ENCODE measurements at regions of chr4 and their contacts with region 1.

Region 1: DNA sequence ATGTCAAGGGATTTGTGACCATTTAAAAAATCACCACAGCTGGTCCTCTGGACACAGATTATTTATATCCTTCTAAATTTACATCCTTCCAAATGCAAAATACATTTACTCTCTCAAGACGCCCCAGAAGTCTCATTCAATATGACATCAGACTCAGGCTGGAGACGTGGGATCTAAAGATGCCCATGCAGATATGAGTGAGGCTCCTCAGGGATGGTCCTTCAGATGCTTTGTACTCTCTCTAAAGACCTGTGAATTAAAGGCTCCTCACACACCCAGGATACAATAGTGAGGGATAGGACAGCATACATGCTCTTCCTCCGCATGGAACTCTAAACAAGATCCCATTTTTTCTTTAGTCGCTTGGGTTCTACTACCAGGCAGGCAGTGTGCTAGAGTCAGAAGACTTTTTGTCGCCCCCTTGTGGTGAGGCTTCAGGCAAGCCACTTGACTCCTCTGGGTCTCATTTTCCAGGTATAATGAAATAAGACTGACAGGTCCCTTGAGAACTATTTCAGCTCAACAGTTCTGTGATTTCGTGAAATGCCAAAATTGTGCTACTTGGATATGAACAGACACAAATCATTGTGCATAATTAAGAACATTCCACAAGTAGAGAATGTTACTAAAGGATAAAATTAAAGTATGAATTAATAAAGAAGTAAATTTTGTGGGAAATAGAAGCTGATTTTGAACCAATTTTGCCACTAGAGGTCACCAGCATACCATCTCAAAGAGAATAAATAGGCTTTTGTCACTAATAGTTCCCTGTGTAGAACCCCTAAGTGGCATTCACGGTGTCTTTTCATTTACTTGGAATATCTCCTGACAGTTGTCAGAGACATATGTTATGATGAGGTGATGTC is 13.7 kb upstream of the SCOC start:
- DNase-seq: peak; percentile 86
- H3K4me3 ChIP-seq: no peak overlapping the region
- H3K27ac ChIP-seq: no peak overlapping the region
- H3K4me1 ChIP-seq: peaks cover 6% of the 10 kb centered on the region
- H3K27me3 ChIP-seq: no peaks in the 10 kb centered on the region
- CTCF ChIP-seq: peak; percentile 77 to 89
- POLR2A ChIP-seq: no peak

Region 2: GRCh38 chr4:139656614-139657486 is 702.9 kb before region 1 on chr4:
- CTCF ChIA-PET with region 1: interaction called, 39 read pairs
- POLR2A ChIA-PET with region 1: no interaction called
- dilution Hi-C with region 1: no loop called
- intact Hi-C with region 1: loop called (anchors 1 kb)
- DNase-seq: peak; percentile 76
- H3K4me3 ChIP-seq: peak overlapping the region in 1 of 3 experiments; percentile 30
- H3K27ac ChIP-seq: peak overlapping the region; percentile 94
- H3K4me1 ChIP-seq: peaks cover 45% of the 10 kb centered on the region
- H3K27me3 ChIP-seq: no peaks in the 10 kb centered on the region
- CTCF ChIP-seq: peak; percentile 83 to 86
- POLR2A ChIP-seq: no peak

Region 3: GRCh38 chr4:139808808-139809756 is 550.7 kb before region 1 on chr4:
- CTCF ChIA-PET with region 1: interaction called, 10 read pairs
- POLR2A ChIA-PET with region 1: no interaction called
- dilution Hi-C with region 1: no loop called
- intact Hi-C with region 1: no loop called
- DNase-seq: peak; percentile 81
- H3K4me3 ChIP-seq: no peak overlapping the region
- H3K27ac ChIP-seq: peak overlapping the region; percentile 18
- H3K4me1 ChIP-seq: peaks cover 9% of the 10 kb centered on the region
- H3K27me3 ChIP-seq: no peaks in the 10 kb centered on the region
- CTCF ChIP-seq: no peak
- POLR2A ChIP-seq: no peak

Region 4: GRCh38 chr4:140326395-140326993 is 33.3 kb before region 1 on chr4:
- CTCF ChIA-PET with region 1: interaction called, 69 read pairs
- POLR2A ChIA-PET with region 1: no interaction called
- dilution Hi-C with region 1: no loop called
- intact Hi-C with region 1: no loop called
- DNase-seq: peak; percentile 68
- H3K4me3 ChIP-seq: no peak overlapping the region
- H3K27ac ChIP-seq: no peak overlapping the region
- H3K4me1 ChIP-seq: no peaks in the 10 kb centered on the region
- H3K27me3 ChIP-seq: peaks cover 4 to 6% of the 10 kb centered on the region in 2 experiments
- CTCF ChIP-seq: peak; percentile 69
- POLR2A ChIP-seq: no peak

Region 5: DNA sequence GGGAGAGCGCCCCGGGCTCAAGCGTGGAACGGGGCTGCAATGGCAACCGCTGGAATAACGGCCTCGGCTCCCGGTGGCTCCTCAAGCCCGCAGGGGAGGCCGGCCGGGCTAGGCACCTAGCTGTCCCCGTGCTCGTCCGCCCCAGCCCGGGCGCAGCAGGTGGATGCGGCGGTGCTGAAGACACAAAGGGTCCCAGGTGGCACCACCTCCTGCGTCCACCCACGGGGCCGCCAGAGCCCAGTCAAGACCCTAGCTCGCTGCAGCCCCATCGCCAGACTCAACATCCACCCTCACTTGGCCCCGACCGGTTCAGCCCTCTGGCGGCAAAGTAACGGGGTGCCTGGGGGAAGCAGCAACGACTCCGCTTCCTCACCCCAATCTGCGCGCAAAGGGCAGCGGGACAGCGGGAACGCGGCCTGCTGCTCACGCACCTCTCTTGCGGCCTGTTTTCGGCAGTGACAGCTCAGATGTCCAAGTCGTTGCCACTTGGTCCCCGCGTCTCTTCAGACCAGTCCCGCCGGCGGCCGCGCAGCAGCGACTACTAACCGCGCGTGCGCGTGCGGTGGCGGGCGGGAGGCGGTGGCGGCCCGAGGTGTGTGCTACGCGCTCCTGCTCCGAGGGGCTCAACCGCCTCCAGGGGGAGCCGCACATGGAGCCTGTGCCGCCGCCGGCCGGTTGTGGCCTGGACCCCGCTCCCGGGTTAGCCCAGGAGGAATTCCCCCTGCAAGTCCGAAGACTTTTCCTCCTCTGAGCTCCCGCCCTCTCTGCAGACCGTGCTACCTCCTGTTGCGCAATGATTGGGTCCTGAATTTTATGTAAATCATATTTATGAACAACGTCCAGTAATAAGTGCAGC is 67.5 kb after region 1 on chr4 and contains the start of gene CLGN:
- CTCF ChIA-PET with region 1: interaction called, 30 read pairs
- POLR2A ChIA-PET with region 1: no interaction called
- dilution Hi-C with region 1: no loop called
- intact Hi-C with region 1: loop called (anchors 1 kb)
- DNase-seq: peak; percentile 78
- H3K4me3 ChIP-seq: peak within 1 kb of the TSS; percentile 30 to 64 (median 48)
- H3K27ac ChIP-seq: no peak within 1 kb of the TSS
- H3K4me1 ChIP-seq: peaks cover 9% of the 10 kb centered on the region
- H3K27me3 ChIP-seq: peaks cover 14 to 34% of the 10 kb centered on the region in 2 experiments
- CTCF ChIP-seq: peak; percentile 58 to 68
- POLR2A ChIP-seq: no peak
- total RNA-seq, gene CLGN: 0.60 and 1.00 TPM in 2 replicates

Region 6: DNA sequence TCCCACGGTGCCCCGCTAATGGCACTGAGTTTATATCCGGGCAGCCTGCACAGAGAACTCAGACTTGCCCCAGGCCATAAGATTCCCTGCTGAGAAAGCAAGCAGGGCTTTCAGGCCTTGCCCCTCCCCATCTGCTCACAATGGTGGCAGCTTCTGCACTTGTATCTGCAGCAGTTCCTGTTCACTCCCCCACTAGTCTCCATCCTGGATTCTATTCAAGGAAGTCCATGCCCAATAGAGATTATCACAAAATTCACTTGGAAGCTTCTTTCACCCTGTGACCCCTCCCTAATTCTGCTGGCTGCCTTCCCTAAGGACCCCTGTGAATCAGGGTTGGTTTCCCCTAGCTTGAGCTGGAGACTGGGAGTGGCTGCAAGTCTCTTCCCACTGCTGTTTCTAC is 243.5 kb after region 1 on chr4:
- CTCF ChIA-PET with region 1: interaction called, 116 read pairs
- POLR2A ChIA-PET with region 1: no interaction called
- dilution Hi-C with region 1: no loop called
- intact Hi-C with region 1: no loop called
- DNase-seq: no peak
- H3K4me3 ChIP-seq: no peak overlapping the region
- H3K27ac ChIP-seq: no peak overlapping the region
- H3K4me1 ChIP-seq: no peaks in the 10 kb centered on the region
- H3K27me3 ChIP-seq: peaks cover 12 to 39% of the 10 kb centered on the region in 2 experiments
- CTCF ChIP-seq: no peak
- POLR2A ChIP-seq: no peak

Region 7: DNA sequence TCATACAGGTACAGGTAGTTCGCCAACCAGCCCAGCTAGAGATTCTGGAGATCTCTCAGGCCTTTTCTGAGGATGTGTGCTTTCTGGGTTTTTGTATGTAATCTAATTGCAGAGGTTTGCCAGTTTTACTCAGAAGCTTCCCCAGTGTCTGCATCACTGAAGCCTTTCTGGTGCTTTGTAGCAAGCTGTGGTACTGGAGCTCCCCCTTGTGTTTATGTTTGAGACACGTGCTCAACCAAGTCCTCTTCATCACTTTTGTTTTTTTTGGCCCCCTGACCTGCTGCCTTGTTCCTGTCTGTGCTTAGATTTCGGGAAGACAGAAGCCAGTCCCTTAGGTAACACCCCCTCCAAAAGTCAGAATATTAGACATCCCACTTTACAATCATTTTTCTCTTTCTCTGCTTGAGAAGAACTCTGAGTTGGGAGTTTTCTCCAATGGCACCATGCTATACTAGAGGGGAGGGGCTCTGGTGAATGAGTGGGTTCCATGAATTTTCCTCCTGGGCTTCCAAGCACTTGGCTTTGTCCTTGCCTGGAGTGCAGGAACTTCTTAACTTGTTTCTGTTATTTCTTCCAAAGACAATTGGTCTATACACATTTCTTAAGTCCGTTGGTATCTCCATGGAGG is 524.8 kb after region 1 on chr4:
- CTCF ChIA-PET with region 1: interaction called, 44 read pairs
- POLR2A ChIA-PET with region 1: no interaction called
- dilution Hi-C with region 1: no loop called
- intact Hi-C with region 1: loop called (anchors 1 kb)
- DNase-seq: peak; percentile 68
- H3K4me3 ChIP-seq: no peak overlapping the region
- H3K27ac ChIP-seq: no peak overlapping the region
- H3K4me1 ChIP-seq: no peaks in the 10 kb centered on the region
- H3K27me3 ChIP-seq: peaks cover 8 to 10% of the 10 kb centered on the region in 2 experiments
- CTCF ChIP-seq: peak; percentile 65 to 74
- POLR2A ChIP-seq: no peak